HCT116 (cell line): ENCODE measurements at regions of chr22 and their contacts with region 1.

Region 1: GRCh38 chr22:17742527-17742902 is 31.8 kb downstream of the BID start:
- DNase-seq: peak; percentile 59
- ATAC-seq: peak; percentile 96
- H3K4me3 ChIP-seq: no peak overlapping the region
- H3K27ac ChIP-seq: no peak overlapping the region
- H3K4me1 ChIP-seq: no peaks in the 10 kb centered on the region
- H3K27me3 ChIP-seq: no peaks in the 10 kb centered on the region
- CTCF ChIP-seq: peak; percentile 40 to 90 (median 76); a peak in 5 of 6 replicates
- POLR2A ChIP-seq: no peak
- RAD21 ChIP-seq: peak; percentile 67

Region 2: GRCh38 chr22:17562906-17563870 is 179.3 kb before region 1 on chr22 and contains the start of gene SLC25A18:
- CTCF ChIA-PET with region 1: interaction called, 7 read pairs
- POLR2A ChIA-PET with region 1: no interaction called
- RAD21 ChIA-PET with region 1: interaction called, 3 read pairs
- intact Hi-C with region 1: loop called (anchors 1 kb)
- DNase-seq: no peak
- ATAC-seq: no peak
- H3K4me3 ChIP-seq: no peak within 1 kb of the TSS
- H3K27ac ChIP-seq: no peak within 1 kb of the TSS
- H3K4me1 ChIP-seq: no peaks in the 10 kb centered on the region
- H3K27me3 ChIP-seq: no peaks in the 10 kb centered on the region
- CTCF ChIP-seq: peak in 1 of 3 experiments; percentile 28; a peak in 1 of 6 replicates
- POLR2A ChIP-seq: no peak
- RAD21 ChIP-seq: no peak
- total RNA-seq, gene SLC25A18: not detected

Region 3: GRCh38 chr22:17732251-17732854 is 10.2 kb before region 1 on chr22:
- CTCF ChIA-PET with region 1: interaction called, 14 read pairs
- POLR2A ChIA-PET with region 1: no interaction called
- RAD21 ChIA-PET with region 1: no interaction called
- intact Hi-C with region 1: no loop called
- DNase-seq: no peak
- ATAC-seq: no peak
- H3K4me3 ChIP-seq: no peak overlapping the region
- H3K27ac ChIP-seq: no peak overlapping the region
- H3K4me1 ChIP-seq: no peaks in the 10 kb centered on the region
- H3K27me3 ChIP-seq: no peaks in the 10 kb centered on the region
- CTCF ChIP-seq: no peak
- POLR2A ChIP-seq: no peak
- RAD21 ChIP-seq: no peak